ENCODE measurements at regions of chr4 and their contacts with region 1.

Region 1: GRCh38 chr4:40888933-40889332 is 139.2 kb downstream of the NSUN7 start:
- DNase-seq: no peak
- H3K4me3 ChIP-seq: no peak overlapping the region
- H3K27ac ChIP-seq: peak overlapping the region in 1 of 2 donors; percentile 78
- H3K4me1 ChIP-seq: no peaks in the 10 kb centered on the region
- H3K27me3 ChIP-seq: no peaks in the 10 kb centered on the region
- CTCF ChIP-seq: no peak
- POLR2A ChIP-seq: no peak

Region 2: GRCh38 chr4:40874901-40875300 is 14.0 kb before region 1 on chr4:
- intact Hi-C with region 1: loop called (anchors 1 kb)
- DNase-seq: no peak
- H3K4me3 ChIP-seq: no peak overlapping the region
- H3K27ac ChIP-seq: no peak overlapping the region
- H3K4me1 ChIP-seq: no peaks in the 10 kb centered on the region
- H3K27me3 ChIP-seq: no peaks in the 10 kb centered on the region
- CTCF ChIP-seq: no peak
- POLR2A ChIP-seq: no peak

Region 3: GRCh38 chr4:40908702-40909362 is 19.9 kb after region 1 on chr4:
- intact Hi-C with region 1: no loop called
- DNase-seq: no peak
- H3K4me3 ChIP-seq: no peak overlapping the region
- H3K27ac ChIP-seq: peak overlapping the region; percentile 60 to 65
- H3K4me1 ChIP-seq: no peaks in the 10 kb centered on the region
- H3K27me3 ChIP-seq: no peaks in the 10 kb centered on the region
- CTCF ChIP-seq: peak; percentile 66 to 83 (median 69)
- POLR2A ChIP-seq: no peak

Region 4: DNA sequence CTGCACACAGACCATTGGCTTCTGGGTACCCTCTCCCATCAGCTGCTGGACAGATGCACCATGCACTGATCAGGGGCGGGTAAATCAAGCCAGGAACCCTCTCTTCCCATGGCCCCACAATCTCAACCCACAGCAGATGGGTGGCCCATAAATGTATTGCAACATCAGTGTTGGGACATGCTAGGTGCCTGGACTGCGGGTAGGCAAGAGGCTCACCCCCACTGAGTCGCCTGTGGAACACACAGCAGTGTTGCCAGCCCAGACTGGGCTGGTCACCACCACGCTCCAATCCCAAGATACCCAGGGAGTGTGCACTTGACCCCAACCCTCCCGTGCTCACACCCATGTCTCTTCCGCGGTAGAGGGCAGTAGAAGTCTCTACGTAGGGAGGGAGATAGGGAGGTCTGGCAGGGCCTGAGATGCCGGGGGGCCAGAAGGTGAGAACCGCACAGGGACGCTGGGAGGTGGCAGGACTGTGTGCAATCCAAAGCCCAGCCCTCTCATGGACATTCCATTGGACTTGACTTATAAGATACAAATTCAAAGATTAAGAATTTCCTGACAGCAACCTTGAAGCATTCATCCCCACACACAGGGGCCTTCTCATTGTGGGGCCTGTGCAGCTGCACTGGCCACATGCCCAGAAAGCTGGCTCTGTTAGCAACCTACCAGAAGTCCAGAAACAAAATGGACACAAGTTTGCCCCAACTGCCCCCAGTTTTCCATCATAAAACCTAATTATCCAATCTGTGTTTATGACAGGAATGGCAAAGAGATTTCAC is 44.5 kb after region 1 on chr4:
- intact Hi-C with region 1: no loop called
- DNase-seq: peak in 1 of 2 donors; percentile 5
- H3K4me3 ChIP-seq: no peak overlapping the region
- H3K27ac ChIP-seq: peak overlapping the region in 1 of 2 donors; percentile 11
- H3K4me1 ChIP-seq: no peaks in the 10 kb centered on the region
- H3K27me3 ChIP-seq: no peaks in the 10 kb centered on the region
- CTCF ChIP-seq: no peak
- POLR2A ChIP-seq: no peak

Measured in breast epithelium (tissue), 4 donors.